ENCODE measurements at regions of chr9 and their contacts with region 1.

Region 1: DNA sequence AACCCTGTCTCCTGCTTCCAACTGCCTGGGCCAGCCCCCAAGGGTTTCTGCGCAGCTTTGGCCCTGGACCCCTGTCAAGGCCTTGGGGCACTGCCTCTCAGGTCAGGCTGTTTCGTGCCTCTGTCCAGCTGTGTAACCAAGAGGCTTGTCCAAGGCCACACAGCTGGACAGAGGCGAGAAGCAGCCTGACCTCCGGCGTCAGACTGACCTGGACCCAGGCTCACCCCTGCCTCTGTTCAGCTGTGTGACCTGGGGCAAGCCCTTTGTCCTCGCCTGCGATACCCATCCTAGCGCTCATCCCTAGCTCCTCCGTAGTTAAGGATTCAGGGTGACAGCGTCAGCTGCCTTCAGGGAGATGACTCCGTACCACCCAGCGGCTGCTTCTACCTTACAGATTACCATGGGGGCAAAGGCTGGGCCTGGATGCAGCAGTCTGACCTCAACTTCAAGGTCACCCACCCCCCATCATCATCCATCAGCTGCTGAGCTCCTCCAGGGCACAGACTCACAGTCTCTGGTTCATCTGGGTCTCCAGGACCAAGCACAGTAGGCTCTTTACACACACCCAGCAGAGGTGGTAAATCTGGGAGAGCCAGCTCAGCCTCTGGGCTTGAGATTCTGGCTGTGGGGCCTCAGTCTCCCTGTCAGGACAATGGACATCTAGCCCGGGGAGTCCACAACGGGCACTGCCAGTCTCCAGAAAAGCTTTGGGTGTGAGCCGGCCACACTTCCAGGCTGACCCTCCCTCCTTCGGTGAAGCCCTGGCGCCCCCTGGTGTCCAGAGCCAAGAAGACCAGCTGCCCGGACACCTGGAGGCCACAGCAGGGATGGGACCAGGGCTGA is 7.9 kb downstream of the AK1 start:
- DNase-seq: peak; percentile 88
- ATAC-seq: peak; percentile 86
- H3K4me3 Mint-ChIP-seq: no peak overlapping the region
- H3K27ac Mint-ChIP-seq: no peak overlapping the region
- H3K4me1 Mint-ChIP-seq: peaks cover 15% of the 10 kb centered on the region
- H3K27me3 Mint-ChIP-seq: no peaks in the 10 kb centered on the region

Region 2: GRCh38 chr9:127586537-127586936 is 283.0 kb before region 1 on chr9:
- CTCF ChIA-PET with region 1: interaction called, 13 read pairs
- DNase-seq: peak; percentile 77
- ATAC-seq: peak; percentile 82
- H3K4me3 Mint-ChIP-seq: no peak overlapping the region
- H3K27ac Mint-ChIP-seq: no peak overlapping the region
- H3K4me1 Mint-ChIP-seq: peaks cover 22% of the 10 kb centered on the region
- H3K27me3 Mint-ChIP-seq: peaks cover 16% of the 10 kb centered on the region

Region 3: DNA sequence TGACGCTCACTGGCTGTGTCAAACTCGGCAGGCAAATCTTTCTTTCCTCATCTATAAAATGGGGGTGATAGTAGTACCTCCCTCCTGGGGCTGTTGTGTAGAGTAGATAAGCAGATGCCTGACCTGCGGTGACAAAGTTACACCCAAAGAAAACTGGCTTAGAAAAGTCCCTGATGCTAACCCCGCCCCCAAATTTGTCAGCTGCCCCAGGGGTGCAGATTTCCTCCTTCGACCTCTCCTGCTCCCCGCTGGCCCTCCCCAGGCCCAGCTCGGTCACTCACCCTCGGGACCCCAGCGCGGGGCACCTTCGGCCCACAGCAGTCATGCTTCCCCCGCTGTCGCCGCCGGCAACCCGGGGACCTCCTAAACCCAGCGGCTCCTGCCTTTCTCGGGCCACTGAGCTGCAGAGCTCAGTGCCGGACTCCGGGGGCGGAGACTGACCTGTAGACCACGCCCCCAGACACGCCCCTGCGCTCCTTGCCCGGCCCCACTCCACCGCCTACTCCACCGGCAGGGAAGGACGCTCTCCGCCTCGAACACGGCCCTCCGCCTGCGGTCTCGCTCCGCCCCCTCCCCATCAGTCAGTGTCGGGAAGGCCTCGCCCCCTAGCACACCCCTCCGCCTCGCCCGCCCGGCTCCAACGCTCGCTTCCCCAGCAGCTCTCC is 98.5 kb before region 1 on chr9:
- CTCF ChIA-PET with region 1: interaction called, 20 read pairs
- DNase-seq: peak; percentile 98
- ATAC-seq: peak; percentile 91
- H3K4me3 Mint-ChIP-seq: peak overlapping the region; percentile 85
- H3K27ac Mint-ChIP-seq: peak overlapping the region; percentile 88
- H3K4me1 Mint-ChIP-seq: peaks cover 79% of the 10 kb centered on the region
- H3K27me3 Mint-ChIP-seq: no peaks in the 10 kb centered on the region

Region 4: GRCh38 chr9:127796225-127796813 is 73.2 kb before region 1 on chr9:
- CTCF ChIA-PET with region 1: interaction called, 18 read pairs
- DNase-seq: no peak
- ATAC-seq: peak; percentile 52
- H3K4me3 Mint-ChIP-seq: peak overlapping the region; percentile 59
- H3K27ac Mint-ChIP-seq: peak overlapping the region; percentile 85
- H3K4me1 Mint-ChIP-seq: peaks cover 33% of the 10 kb centered on the region
- H3K27me3 Mint-ChIP-seq: no peaks in the 10 kb centered on the region

Region 5: DNA sequence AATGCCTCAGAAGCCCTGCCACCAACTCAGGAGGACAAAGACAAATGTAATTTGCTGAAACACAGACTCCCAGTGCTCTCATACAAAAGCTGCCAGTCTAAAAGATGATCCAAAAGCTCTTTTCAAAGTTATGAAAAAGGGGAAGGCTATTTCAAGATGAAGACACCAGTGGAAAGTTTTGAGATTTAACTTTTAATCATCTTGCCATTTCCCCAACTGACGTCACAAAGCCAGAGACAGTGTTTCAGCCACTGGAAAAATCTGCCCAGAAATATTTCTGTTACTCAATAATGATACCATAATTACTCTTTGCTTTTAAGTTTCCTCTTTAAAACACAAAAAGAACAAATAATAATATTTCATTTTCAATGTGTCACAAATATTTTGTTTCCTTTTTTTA is 36.0 kb before region 1 on chr9:
- CTCF ChIA-PET with region 1: interaction called, 11 read pairs
- DNase-seq: no peak
- ATAC-seq: no peak
- H3K4me3 Mint-ChIP-seq: no peak overlapping the region
- H3K27ac Mint-ChIP-seq: no peak overlapping the region
- H3K4me1 Mint-ChIP-seq: peaks cover 9% of the 10 kb centered on the region
- H3K27me3 Mint-ChIP-seq: no peaks in the 10 kb centered on the region

Region 6: DNA sequence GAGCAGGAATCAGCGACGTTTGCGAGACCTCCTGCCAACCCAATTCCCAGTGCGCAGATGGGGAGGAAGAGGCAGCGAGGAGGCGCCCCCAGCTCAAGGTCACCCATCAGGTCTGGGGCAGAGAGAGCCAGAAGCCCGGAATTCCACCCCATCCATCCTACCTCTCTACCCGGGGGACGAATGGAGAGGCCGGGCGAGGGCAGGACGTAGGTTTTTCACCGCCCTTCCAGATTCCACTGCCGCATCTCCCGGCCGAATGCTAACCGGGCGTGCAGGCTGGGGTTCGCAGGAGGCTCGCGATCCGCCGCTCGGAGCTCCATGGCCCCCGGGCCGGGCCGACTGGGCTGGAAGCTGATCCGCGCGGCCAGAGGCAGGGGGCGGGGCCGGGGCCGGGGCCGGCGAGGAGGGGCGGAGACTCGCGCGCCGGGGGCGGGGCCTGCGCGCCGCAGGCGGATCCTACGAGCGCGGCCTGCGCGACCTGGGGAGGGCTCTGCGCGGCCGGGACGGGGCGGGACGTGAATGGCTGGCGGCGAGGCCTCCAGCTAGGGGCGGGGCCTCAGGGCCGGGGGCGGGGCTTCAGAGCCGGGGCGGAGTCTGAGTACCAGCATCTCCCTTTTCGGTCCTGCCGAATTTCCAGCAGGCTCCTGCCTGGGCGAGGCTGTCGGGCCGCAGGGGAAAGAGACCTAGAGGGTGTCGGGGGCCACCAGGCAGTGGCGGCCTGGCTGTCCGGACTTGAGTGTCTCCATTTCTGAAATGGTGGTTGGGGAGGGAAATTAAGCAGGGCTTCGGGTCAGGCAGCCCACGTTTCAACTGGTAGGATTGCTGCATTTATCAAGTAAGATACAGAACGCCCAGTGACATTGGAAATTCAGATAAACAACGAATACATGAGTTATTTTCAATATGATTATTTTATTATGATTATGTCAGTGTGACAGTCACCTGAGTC is 47.4 kb after region 1 on chr9 and contains the start of gene ST6GALNAC4:
- CTCF ChIA-PET with region 1: interaction called, 42 read pairs
- DNase-seq: peak; percentile 96
- ATAC-seq: peak; percentile 94
- H3K4me3 Mint-ChIP-seq: peak within 1 kb of the TSS; percentile 81
- H3K27ac Mint-ChIP-seq: peak within 1 kb of the TSS; percentile 91
- H3K4me1 Mint-ChIP-seq: peaks cover 75% of the 10 kb centered on the region
- H3K27me3 Mint-ChIP-seq: peaks cover under 1% of the 10 kb centered on the region
- total RNA-seq, gene ST6GALNAC4: 64.7 to 71.4 TPM

Region 7: GRCh38 chr9:127943731-127944144 is 74.2 kb after region 1 on chr9:
- CTCF ChIA-PET with region 1: no interaction called
- DNase-seq: peak; percentile 86
- ATAC-seq: peak; percentile 77
- H3K4me3 Mint-ChIP-seq: no peak overlapping the region
- H3K27ac Mint-ChIP-seq: no peak overlapping the region
- H3K4me1 Mint-ChIP-seq: peaks cover 15% of the 10 kb centered on the region
- H3K27me3 Mint-ChIP-seq: no peaks in the 10 kb centered on the region